Heart left ventricle (tissue), 16 donors: ENCODE measurements at regions of chr5 and their contacts with region 1.

Region 1: DNA sequence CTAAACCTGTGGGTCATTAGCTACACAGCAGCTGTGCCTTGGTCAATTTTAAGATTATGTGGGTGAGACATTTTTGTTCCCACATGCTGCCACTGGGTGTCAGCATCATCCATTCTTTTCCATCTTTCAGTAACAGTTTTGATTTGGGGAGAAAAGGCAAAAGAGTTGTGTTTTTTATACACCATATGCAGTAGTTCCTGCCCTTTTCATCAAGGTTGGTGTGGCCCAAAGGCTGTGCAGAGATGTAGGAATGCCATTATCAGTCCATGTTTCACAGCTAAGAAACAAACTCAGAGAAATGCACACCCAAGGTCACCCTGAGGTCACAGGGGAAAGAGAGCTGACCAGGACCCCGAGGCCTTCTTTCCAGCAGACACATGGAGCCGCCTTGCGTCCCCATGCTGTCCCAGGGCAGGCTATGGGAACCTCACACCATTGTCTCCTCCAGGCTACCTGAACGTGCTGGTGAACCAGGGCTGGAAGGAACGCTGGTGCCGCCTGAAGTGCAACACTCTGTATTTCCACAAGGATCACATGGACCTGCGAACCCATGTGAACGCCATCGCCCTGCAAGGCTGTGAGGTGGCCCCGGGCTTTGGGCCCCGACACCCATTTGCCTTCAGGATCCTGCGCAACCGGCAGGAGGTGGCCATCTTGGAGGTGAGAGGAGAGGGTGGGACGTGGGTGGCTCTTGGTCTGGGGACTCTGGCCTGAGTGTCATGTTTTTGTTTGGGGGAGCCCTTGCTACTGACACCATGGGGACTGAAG is 27.8 kb upstream of the GRPEL2 start:
- DNase-seq: no peak
- ATAC-seq: no peak
- H3K4me3 ChIP-seq: no peak overlapping the region
- H3K27ac ChIP-seq: peak overlapping the region in 11 of 12 donors; percentile 2 to 79 (median 54)
- H3K4me1 ChIP-seq: peaks cover 10 to 48% (median 21%) of the 10 kb centered on the region in 12 donors
- H3K27me3 ChIP-seq: no peaks in the 10 kb centered on the region
- CTCF ChIP-seq: peak; percentile 40 to 75 (median 64)
- POLR2A ChIP-seq: no peak

Region 2: GRCh38 chr5:149162401-149163084 is 154.9 kb before region 1 on chr5:
- intact Hi-C with region 1: no loop called
- DNase-seq: no peak
- ATAC-seq: peak in 3 of 4 donors; percentile 12 to 47 (median 25)
- H3K4me3 ChIP-seq: no peak overlapping the region
- H3K27ac ChIP-seq: peak overlapping the region in 10 of 12 donors; percentile 4 to 94 (median 34)
- H3K4me1 ChIP-seq: peaks cover 16 to 95% (median 57%) of the 10 kb centered on the region in 12 donors
- H3K27me3 ChIP-seq: no peaks in the 10 kb centered on the region
- CTCF ChIP-seq: no peak
- POLR2A ChIP-seq: no peak

Region 3: GRCh38 chr5:149357370-149358293 is 40.2 kb after region 1 on chr5 and contains the start of gene PCYOX1L:
- intact Hi-C with region 1: loop called in 1 of 10 experiments (anchors 5 kb)
- DNase-seq: peak; percentile 97 to 98 (median 97)
- ATAC-seq: peak; percentile 98 to 100 (median 100)
- H3K4me3 ChIP-seq: peak within 1 kb of the TSS; percentile 54 to 97 (median 77)
- H3K27ac ChIP-seq: peak within 1 kb of the TSS in 11 of 12 donors; percentile 31 to 84 (median 65)
- H3K4me1 ChIP-seq: peaks cover 0 to 30% (median 11%) of the 10 kb centered on the region in 12 donors
- H3K27me3 ChIP-seq: no peaks in the 10 kb centered on the region
- CTCF ChIP-seq: peak in 1 of 12 donors; percentile 7
- POLR2A ChIP-seq: peak in 1 of 2 donors; percentile 50
- total RNA-seq, gene PCYOX1L: 2.3 to 6.8 (median 3.7) TPM

Region 4: GRCh38 chr5:149367249-149367971 is 49.9 kb after region 1 on chr5:
- intact Hi-C with region 1: loop called in 9 of 10 experiments (anchors 2 to 5 kb)
- DNase-seq: peak in 4 of 5 donors; percentile 58 to 69 (median 64)
- ATAC-seq: peak in 3 of 4 donors; percentile 57 to 62 (median 60)
- H3K4me3 ChIP-seq: no peak overlapping the region
- H3K27ac ChIP-seq: peak overlapping the region in 1 of 12 donors; percentile 60
- H3K4me1 ChIP-seq: peaks cover 0 to 26% (median 10%) of the 10 kb centered on the region in 12 donors
- H3K27me3 ChIP-seq: no peaks in the 10 kb centered on the region
- CTCF ChIP-seq: peak; percentile 62 to 84 (median 81)
- POLR2A ChIP-seq: no peak

Region 5: GRCh38 chr5:149434162-149435014 is 116.9 kb after region 1 on chr5:
- intact Hi-C with region 1: loop called in 2 of 10 experiments (anchors 5 kb)
- DNase-seq: peak in 3 of 5 donors; percentile 60 to 64 (median 62)
- ATAC-seq: peak; percentile 14 to 27 (median 22)
- H3K4me3 ChIP-seq: no peak overlapping the region
- H3K27ac ChIP-seq: peak overlapping the region in 10 of 12 donors; percentile 8 to 97 (median 44)
- H3K4me1 ChIP-seq: peaks cover 7 to 47% (median 23%) of the 10 kb centered on the region in 12 donors
- H3K27me3 ChIP-seq: no peaks in the 10 kb centered on the region
- CTCF ChIP-seq: peak; percentile 82 to 94 (median 88)
- POLR2A ChIP-seq: no peak